HEK293 (cell line): ENCODE measurements at regions of chr15 and their contacts with region 1.

Region 1: DNA sequence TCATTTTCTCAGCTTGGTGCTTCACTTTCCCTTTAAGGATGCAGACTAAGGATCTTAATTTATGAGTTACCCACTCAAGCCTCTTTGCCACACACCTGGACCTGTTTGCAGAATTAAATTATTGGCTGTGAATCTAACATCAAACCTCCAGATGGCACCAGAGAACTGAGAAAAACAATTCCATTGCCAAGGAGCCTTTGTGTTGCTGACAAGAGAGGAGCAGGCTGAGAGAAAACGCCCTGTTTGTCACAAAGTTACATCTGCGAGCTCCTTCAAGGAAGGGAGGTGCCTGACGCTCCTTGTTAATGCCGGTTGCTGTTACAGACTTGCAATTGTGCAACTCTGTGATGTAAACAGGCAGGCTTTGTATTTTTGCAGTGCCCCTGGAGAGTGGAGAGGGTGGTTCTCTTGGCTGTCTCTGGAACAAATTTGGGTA is 36.3 kb upstream of the TMC3 start:
- H3K4me3 ChIP-seq: no peak overlapping the region
- H3K27ac ChIP-seq: no peak overlapping the region
- H3K4me1 ChIP-seq: peaks cover 4% of the 10 kb centered on the region
- CTCF ChIP-seq: peak; percentile 63; the same call in 1 of the 2 replicates

Region 2: DNA sequence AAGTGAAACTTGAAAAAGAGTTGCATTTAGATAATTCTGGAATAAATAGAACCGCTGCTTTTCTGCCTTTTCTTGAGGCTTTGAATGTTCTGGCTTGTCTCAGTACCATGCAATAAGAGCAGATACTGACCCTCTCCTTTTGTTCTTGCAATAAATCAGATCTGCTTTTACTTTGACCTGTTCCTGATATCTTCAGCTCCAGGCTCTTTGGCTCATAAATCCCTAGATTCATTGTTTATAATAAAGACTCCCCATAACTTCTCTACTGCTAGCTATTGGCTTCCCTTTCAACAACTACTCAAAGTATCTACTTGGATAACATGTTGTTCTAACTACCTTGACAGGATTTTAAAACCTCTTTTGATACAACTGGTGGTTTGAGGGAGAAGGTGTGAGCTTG is 11.1 kb after region 1 on chr15:
- CTCF ChIA-PET with region 1: interaction called, 13 read pairs
- POLR2A ChIA-PET with region 1: no interaction called
- H3K4me3 ChIP-seq: no peak overlapping the region
- H3K27ac ChIP-seq: no peak overlapping the region
- H3K4me1 ChIP-seq: peaks cover 9% of the 10 kb centered on the region; the same call in 1 of the 2 replicates
- CTCF ChIP-seq: no peak

Region 3: GRCh38 chr15:81480645-81481053 is 70.3 kb after region 1 on chr15:
- CTCF ChIA-PET with region 1: interaction called, 13 read pairs
- POLR2A ChIA-PET with region 1: no interaction called
- H3K4me3 ChIP-seq: no peak overlapping the region
- H3K27ac ChIP-seq: no peak overlapping the region
- H3K4me1 ChIP-seq: no peaks in the 10 kb centered on the region
- CTCF ChIP-seq: peak; percentile 55; the same call in 1 of the 2 replicates

Region 4: GRCh38 chr15:81653259-81653658 is 242.9 kb after region 1 on chr15:
- CTCF ChIA-PET with region 1: no interaction called
- POLR2A ChIA-PET with region 1: no interaction called
- H3K4me3 ChIP-seq: no peak overlapping the region
- H3K27ac ChIP-seq: no peak overlapping the region
- H3K4me1 ChIP-seq: no peaks in the 10 kb centered on the region
- CTCF ChIP-seq: no peak

Region 5: DNA sequence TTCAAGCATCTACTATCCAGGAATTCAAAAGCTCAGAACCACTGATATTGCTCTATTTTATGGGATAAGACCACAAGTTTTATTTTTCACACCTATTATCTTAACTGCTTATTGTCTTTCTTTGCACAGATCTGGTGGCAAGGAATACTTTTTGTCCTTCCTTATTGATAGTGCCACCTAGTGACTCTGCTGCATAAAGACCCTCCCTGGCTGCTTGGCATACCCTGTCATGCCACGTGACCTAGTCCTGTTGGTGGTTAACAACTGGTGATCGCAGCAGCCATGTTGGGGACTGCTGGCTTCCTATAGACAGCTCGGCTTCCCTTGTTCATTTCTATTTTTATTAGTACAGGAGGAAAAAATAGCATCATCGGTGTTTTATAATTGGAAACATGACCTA is 399.2 kb after region 1 on chr15:
- CTCF ChIA-PET with region 1: interaction called, 10 read pairs
- POLR2A ChIA-PET with region 1: no interaction called
- H3K4me3 ChIP-seq: no peak overlapping the region
- H3K27ac ChIP-seq: no peak overlapping the region
- H3K4me1 ChIP-seq: no peaks in the 10 kb centered on the region
- CTCF ChIP-seq: no peak

Region 6: GRCh38 chr15:81939604-81940440 is 529.5 kb after region 1 on chr15:
- CTCF ChIA-PET with region 1: interaction called, 14 read pairs
- POLR2A ChIA-PET with region 1: no interaction called
- H3K4me3 ChIP-seq: no peak overlapping the region
- H3K27ac ChIP-seq: peak overlapping the region; percentile 54
- H3K4me1 ChIP-seq: peaks cover 20% of the 10 kb centered on the region
- CTCF ChIP-seq: peak; percentile 43; the same call in 1 of the 2 replicates

Region 7: DNA sequence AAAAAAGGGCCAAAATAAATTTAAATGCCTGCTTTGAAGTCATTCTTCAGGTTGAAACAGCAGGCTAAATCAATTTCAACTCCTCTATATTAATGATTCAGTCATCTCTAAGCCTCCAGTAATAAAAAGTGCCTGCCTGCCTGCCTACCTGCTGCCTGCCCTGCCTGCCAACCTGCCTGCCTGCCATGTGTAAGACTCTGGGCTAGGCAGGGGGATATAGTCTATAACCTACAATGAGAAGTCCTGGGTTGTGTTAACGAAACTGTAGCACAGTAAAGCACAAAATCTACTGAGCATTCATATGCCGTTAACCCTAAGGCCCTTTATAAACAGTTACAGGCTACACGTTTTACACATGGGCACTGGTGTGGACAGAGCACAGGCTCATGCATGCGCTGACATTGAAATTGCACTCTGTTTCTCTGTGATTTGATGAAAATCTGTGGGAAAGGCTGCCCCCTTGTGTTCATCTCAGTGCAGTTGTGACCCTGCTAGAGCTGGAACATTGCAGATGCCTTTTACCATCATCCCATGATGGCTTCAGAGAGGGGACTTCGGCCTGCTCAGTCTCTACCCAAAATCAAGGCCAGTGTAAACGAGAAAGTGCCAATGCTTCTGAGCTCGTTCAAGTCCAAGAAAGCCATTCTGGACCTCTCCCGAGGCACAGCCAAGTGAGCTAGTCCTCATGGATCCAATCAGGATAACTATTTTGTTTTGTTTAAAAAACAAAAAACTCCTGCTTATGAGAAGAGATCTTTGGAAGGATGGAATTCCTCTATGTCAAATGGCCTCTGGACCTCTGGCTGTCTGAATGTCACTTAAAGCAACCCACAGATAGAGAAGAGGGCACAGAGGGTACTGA is 787.6 kb after region 1 on chr15:
- CTCF ChIA-PET with region 1: interaction called, 15 read pairs
- POLR2A ChIA-PET with region 1: no interaction called
- H3K4me3 ChIP-seq: no peak overlapping the region
- H3K27ac ChIP-seq: no peak overlapping the region
- H3K4me1 ChIP-seq: no peaks in the 10 kb centered on the region
- CTCF ChIP-seq: peak; percentile 53; the same call in 1 of the 2 replicates